ENCODE measurements at regions of chr4 and their contacts with region 1.

Region 1: DNA sequence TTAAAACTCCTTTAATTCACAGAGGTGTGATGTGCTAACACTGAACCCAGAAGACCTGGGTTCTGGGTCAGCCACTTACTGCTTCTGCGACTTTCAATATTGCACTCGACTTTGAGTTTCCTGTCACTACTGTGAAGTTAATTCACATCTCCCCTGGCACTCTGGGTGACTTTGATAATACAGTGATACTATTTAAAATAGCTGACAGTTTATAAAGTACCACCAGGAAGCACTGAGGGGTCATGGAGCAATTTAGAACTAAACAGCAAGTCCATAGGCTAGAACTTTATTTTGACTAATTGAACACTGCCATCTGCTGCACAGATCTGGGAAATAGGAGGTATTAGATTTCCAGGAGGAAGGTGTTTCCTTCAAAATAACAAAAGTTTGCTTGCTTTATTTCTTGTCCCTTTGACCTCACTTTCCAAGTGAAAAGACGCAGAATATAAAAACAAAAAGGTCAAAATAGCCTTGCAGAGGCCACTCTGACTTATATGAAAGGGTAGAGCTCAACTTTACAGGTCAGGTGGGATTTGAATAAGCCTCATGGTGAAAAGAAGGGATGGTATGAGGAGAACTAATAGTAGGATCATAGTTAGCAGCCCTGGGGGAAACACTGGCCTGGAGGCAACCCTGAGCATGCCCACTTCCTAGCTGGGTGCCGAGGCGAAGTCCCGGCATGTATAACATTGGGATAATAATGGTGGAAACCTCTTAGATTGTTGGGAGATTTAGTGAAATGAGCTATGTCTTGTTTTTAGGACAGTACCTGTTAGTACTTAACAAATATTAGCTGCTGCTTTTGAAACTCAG is 53.4 kb downstream of the ZNF518B start:
- DNase-seq: no peak
- ATAC-seq: peak; percentile 48; the same call in 1 of the 3 replicates
- H3K4me3 ChIP-seq: no peak overlapping the region
- H3K27ac ChIP-seq: no peak overlapping the region
- H3K4me1 ChIP-seq: no peaks in the 10 kb centered on the region
- H3K27me3 ChIP-seq: no peaks in the 10 kb centered on the region
- CTCF ChIP-seq: peak in 2 of 3 experiments; percentile 38 to 46; a peak in 3 of 6 replicates
- EP300 ChIP-seq: no peak
- POLR2A ChIP-seq: no peak
- RAD21 ChIP-seq: peak; percentile 64

Region 2: DNA sequence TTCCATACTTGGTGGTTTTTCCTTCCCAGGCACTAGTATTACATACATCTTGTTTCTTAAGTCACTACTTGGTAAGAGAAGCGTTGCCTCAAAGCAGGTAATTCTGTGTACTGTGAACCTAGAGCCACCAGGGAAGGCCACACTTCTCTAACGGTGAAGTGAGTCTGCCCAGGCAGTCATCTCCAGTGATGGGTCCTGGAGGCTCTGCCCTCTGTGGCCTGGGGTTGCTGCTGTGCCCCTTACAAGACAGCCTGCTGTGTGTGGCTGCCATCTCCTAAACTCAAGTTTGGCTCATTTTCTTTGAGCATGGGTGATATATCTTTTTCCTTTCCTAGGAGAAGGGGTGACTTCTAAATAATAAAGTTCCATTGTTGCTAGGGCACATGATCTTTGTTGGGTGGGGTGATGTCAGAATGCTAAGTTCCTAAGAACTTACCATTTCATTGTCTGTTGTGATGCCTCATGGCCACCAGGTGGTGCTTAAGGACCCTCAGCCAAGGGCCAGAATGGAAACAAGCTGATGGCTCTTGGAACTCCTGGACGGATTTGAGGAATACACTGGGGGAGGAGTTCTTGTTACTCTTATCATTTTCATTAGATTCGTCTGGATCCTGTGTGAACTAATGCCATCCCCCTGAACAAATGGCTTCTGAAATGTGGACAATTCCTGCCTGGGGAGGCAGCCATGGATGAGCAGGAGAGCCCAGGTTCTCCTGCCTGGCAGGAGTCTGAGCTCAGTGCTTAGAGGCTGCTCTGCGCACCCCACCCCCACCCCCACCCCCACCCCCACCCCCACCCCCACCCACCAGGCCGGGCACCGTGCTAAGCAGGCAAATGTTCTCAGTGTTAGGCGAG is 246.1 kb before region 1 on chr4:
- CTCF ChIA-PET with region 1: interaction called, 5 read pairs
- POLR2A ChIA-PET with region 1: no interaction called
- RAD21 ChIA-PET with region 1: no interaction called
- SMC1A ChIA-PET with region 1: interaction called, 6 read pairs
- in situ Hi-C with region 1: loop called (anchors 10 kb)
- intact Hi-C with region 1: loop called (anchors 2 kb)
- DNase-seq: peak; percentile 9
- ATAC-seq: peak; percentile 89
- H3K4me3 ChIP-seq: no peak overlapping the region
- H3K27ac ChIP-seq: no peak overlapping the region
- H3K4me1 ChIP-seq: no peaks in the 10 kb centered on the region
- H3K27me3 ChIP-seq: no peaks in the 10 kb centered on the region
- CTCF ChIP-seq: peak; percentile 77 to 83 (median 80)
- EP300 ChIP-seq: no peak
- POLR2A ChIP-seq: no peak
- RAD21 ChIP-seq: peak; percentile 88

Region 3: GRCh38 chr4:10164877-10165283 is 239.0 kb before region 1 on chr4:
- CTCF ChIA-PET with region 1: interaction called, 5 read pairs
- POLR2A ChIA-PET with region 1: no interaction called
- RAD21 ChIA-PET with region 1: interaction called, 3 read pairs
- SMC1A ChIA-PET with region 1: interaction called, 3 read pairs
- in situ Hi-C with region 1: loop called (anchors 10 kb)
- intact Hi-C with region 1: no loop called
- DNase-seq: no peak
- ATAC-seq: no peak
- H3K4me3 ChIP-seq: no peak overlapping the region
- H3K27ac ChIP-seq: no peak overlapping the region
- H3K4me1 ChIP-seq: no peaks in the 10 kb centered on the region
- H3K27me3 ChIP-seq: no peaks in the 10 kb centered on the region
- CTCF ChIP-seq: peak; percentile 60 to 63 (median 61)
- EP300 ChIP-seq: no peak
- POLR2A ChIP-seq: no peak
- RAD21 ChIP-seq: peak; percentile 60

Region 4: GRCh38 chr4:10336471-10336870 is 67.4 kb before region 1 on chr4:
- CTCF ChIA-PET with region 1: no interaction called
- POLR2A ChIA-PET with region 1: no interaction called
- RAD21 ChIA-PET with region 1: no interaction called
- SMC1A ChIA-PET with region 1: no interaction called
- in situ Hi-C with region 1: no loop called
- intact Hi-C with region 1: no loop called
- DNase-seq: no peak
- ATAC-seq: no peak
- H3K4me3 ChIP-seq: no peak overlapping the region
- H3K27ac ChIP-seq: no peak overlapping the region
- H3K4me1 ChIP-seq: no peaks in the 10 kb centered on the region
- H3K27me3 ChIP-seq: no peaks in the 10 kb centered on the region
- CTCF ChIP-seq: no peak
- EP300 ChIP-seq: no peak
- POLR2A ChIP-seq: no peak
- RAD21 ChIP-seq: no peak

Region 5: GRCh38 chr4:10384974-10385373 is 18.9 kb before region 1 on chr4:
- CTCF ChIA-PET with region 1: interaction called, 9 read pairs
- POLR2A ChIA-PET with region 1: no interaction called
- RAD21 ChIA-PET with region 1: no interaction called
- SMC1A ChIA-PET with region 1: interaction called, 4 read pairs
- in situ Hi-C with region 1: no loop called
- intact Hi-C with region 1: loop called (anchors 1 kb)
- DNase-seq: no peak
- ATAC-seq: no peak
- H3K4me3 ChIP-seq: no peak overlapping the region
- H3K27ac ChIP-seq: no peak overlapping the region
- H3K4me1 ChIP-seq: no peaks in the 10 kb centered on the region
- H3K27me3 ChIP-seq: no peaks in the 10 kb centered on the region
- CTCF ChIP-seq: no peak
- EP300 ChIP-seq: no peak
- POLR2A ChIP-seq: no peak
- RAD21 ChIP-seq: no peak

Measured in GM12878 (cell line).